CD8-positive, alpha-beta T cell (primary cell): ENCODE measurements at regions of chr2 and their contacts with region 1.

Region 1: GRCh38 chr2:225052703-225053102 is 10.4 kb upstream of the DOCK10 start:
- DNase-seq: peak in 8 of 9 experiments; percentile 15 to 78 (median 40)
- ATAC-seq: peak; percentile 79
- H3K4me3 ChIP-seq: no peak overlapping the region
- H3K4me3 Mint-ChIP-seq: peak overlapping the region; percentile 64
- H3K27ac ChIP-seq: peak overlapping the region in 1 of 2 experiments; percentile 32
- H3K27ac Mint-ChIP-seq: peak overlapping the region; percentile 87
- H3K4me1 ChIP-seq: peaks cover 54% of the 10 kb centered on the region
- H3K4me1 Mint-ChIP-seq: peaks cover 67% of the 10 kb centered on the region
- H3K27me3 ChIP-seq: no peaks in the 10 kb centered on the region
- H3K27me3 Mint-ChIP-seq: no peaks in the 10 kb centered on the region
- CTCF ChIP-seq: no peak

Region 2: GRCh38 chr2:226835796-226836547 is 1783.3 kb after region 1 on chr2 and contains the start of gene RHBDD1:
- CTCF ChIA-PET with region 1: no interaction called
- POLR2A ChIA-PET with region 1: no interaction called
- intact Hi-C with region 1: loop called in 1 of 2 experiments (anchors 5 kb)
- DNase-seq: peak; percentile 88 to 98 (median 94)
- ATAC-seq: peak; percentile 82
- H3K4me3 ChIP-seq: peak within 1 kb of the TSS; percentile 64 to 74
- H3K4me3 Mint-ChIP-seq: peak within 1 kb of the TSS; percentile 90
- H3K27ac ChIP-seq: peak within 1 kb of the TSS; percentile 94 to 97
- H3K27ac Mint-ChIP-seq: peak within 1 kb of the TSS; percentile 98
- H3K4me1 ChIP-seq: peaks cover 51% of the 10 kb centered on the region
- H3K4me1 Mint-ChIP-seq: peaks cover 61% of the 10 kb centered on the region
- H3K27me3 ChIP-seq: no peaks in the 10 kb centered on the region
- H3K27me3 Mint-ChIP-seq: no peaks in the 10 kb centered on the region
- CTCF ChIP-seq: no peak
- total RNA-seq, gene RHBDD1: 29.7 to 30.9 TPM